HCT116 (cell line): ENCODE measurements at regions of chr7 and their contacts with region 1.

Region 1: DNA sequence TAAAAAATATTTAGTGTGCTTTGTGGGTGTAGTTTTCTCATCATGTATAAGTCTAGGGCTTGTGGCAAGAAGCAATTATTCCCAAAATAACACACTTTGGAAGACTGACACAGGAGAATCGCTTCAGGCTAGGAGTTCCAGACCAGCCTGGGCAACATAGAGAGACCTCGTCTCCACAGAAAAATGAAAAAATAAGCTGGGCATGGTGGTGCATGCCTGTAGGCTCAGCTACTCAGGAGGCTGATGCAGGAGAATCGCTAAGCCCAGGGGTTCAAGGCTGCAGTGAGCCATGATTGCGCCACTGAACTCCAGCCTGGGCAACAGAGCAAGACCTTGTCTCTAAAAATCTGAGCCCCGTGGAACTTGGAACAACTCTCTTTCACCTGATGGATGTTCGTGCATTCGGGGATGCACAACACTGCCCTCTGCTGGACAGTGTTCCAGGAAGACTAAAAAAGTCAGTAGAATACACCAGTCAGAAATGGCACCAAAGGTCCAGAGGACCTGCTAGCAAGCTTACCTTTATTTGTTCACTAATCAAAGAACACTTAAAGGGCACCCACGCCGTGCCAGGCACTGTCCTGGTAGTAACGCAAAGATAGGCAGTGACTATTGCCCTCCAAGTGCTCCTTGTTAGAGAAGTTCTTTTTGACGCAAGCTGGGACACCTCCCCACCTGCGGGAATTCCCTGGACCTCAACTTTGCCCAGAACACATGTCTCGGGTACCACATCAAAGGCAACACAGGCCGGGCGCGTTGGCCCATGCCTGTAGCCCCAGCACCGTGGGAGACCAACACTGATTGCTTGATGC is 81.9 kb upstream of the CALN1 start:
- DNase-seq: peak; percentile 51
- ATAC-seq: peak; percentile 83
- H3K4me3 ChIP-seq: no peak overlapping the region
- H3K27ac ChIP-seq: no peak overlapping the region
- H3K4me1 ChIP-seq: no peaks in the 10 kb centered on the region
- H3K27me3 ChIP-seq: no peaks in the 10 kb centered on the region
- CTCF ChIP-seq: peak in 2 of 3 experiments; percentile 70 to 81; a peak in 4 of 6 replicates
- POLR2A ChIP-seq: no peak
- RAD21 ChIP-seq: peak; percentile 46; the same call in 1 of the 2 replicates

Region 2: DNA sequence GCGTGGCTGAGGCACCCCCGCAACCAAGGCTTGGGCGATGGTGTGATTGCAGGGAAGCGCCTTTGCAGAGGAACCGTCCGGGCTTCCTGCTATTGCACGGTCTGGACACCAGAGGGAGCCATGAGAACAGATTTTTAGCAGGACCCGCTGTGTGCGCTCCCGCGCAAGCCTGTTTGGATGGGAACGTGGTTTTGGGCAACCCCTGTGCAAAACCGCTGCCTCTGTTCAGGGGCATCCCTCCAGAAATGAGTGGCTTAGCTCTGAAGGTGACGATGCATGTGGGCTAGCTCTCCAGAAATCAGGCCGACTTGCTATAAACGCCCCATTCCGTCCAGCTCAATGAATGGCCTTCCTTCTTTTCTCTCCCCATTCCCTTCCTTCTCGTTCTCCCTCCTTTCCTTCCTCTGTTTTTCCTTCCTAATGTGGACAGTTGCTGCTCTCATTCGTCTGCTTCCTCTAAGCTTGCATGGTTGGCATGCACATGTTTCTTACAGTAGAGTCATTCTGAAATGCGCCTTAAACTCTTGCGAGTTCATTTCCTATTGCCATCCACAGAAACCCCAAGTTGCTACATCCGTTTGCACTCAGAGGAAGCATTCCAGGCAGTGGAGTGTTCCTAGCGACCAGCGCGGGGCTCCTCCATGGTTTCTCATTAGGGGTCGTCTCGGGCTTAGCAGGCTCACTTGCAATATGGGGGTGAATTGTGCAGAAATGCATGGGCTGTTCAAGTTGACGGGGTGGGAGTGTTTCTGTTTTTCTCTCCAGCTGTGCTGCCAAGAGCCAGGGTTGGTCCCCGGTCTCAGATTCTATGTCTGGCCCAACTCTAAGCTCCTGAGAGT is 1664.6 kb before region 1 on chr7:
- CTCF ChIA-PET with region 1: no interaction called
- POLR2A ChIA-PET with region 1: no interaction called
- RAD21 ChIA-PET with region 1: no interaction called
- intact Hi-C with region 1: loop called (anchors 10 kb)
- DNase-seq: peak; percentile 2
- ATAC-seq: peak; percentile 63
- H3K4me3 ChIP-seq: no peak overlapping the region
- H3K27ac ChIP-seq: no peak overlapping the region
- H3K4me1 ChIP-seq: no peaks in the 10 kb centered on the region
- H3K27me3 ChIP-seq: no peaks in the 10 kb centered on the region
- CTCF ChIP-seq: peak in 2 of 3 experiments; percentile 73 to 77; a peak in 4 of 6 replicates
- POLR2A ChIP-seq: no peak
- RAD21 ChIP-seq: peak; percentile 49

Region 3: GRCh38 chr7:70856866-70857630 is 1637.0 kb before region 1 on chr7:
- CTCF ChIA-PET with region 1: no interaction called
- POLR2A ChIA-PET with region 1: no interaction called
- RAD21 ChIA-PET with region 1: no interaction called
- intact Hi-C with region 1: loop called (anchors 5 kb)
- DNase-seq: peak; percentile 13
- ATAC-seq: no peak
- H3K4me3 ChIP-seq: no peak overlapping the region
- H3K27ac ChIP-seq: no peak overlapping the region
- H3K4me1 ChIP-seq: no peaks in the 10 kb centered on the region
- H3K27me3 ChIP-seq: no peaks in the 10 kb centered on the region
- CTCF ChIP-seq: peak; percentile 16 to 70 (median 62); a peak in 4 of 6 replicates
- POLR2A ChIP-seq: no peak
- RAD21 ChIP-seq: peak; percentile 51; the same call in 1 of the 2 replicates

Region 4: DNA sequence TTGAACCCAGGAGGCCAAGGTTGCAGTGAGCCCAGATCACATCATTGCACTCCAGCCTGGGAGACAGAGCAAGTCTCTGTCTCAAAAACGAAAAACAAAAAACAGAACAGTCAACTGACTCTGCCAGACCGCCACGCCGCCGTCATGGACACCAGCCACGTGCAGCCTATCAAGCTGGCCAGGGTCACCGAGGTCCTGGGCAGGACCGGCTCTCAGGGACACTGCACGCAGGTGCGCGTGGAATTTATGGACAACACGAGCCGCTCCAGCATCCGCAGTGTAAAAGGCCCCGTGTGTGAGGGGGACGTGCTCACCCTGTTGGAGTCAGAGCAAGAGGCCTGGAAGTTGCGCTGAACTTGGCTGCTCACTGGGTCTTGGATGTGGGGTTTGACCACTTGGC is 551.9 kb before region 1 on chr7:
- CTCF ChIA-PET with region 1: no interaction called
- POLR2A ChIA-PET with region 1: no interaction called
- RAD21 ChIA-PET with region 1: no interaction called
- intact Hi-C with region 1: no loop called
- DNase-seq: no peak
- ATAC-seq: no peak
- H3K4me3 ChIP-seq: no peak overlapping the region
- H3K27ac ChIP-seq: no peak overlapping the region
- H3K4me1 ChIP-seq: no peaks in the 10 kb centered on the region
- H3K27me3 ChIP-seq: no peaks in the 10 kb centered on the region
- CTCF ChIP-seq: no peak
- POLR2A ChIP-seq: no peak
- RAD21 ChIP-seq: no peak

Region 5: DNA sequence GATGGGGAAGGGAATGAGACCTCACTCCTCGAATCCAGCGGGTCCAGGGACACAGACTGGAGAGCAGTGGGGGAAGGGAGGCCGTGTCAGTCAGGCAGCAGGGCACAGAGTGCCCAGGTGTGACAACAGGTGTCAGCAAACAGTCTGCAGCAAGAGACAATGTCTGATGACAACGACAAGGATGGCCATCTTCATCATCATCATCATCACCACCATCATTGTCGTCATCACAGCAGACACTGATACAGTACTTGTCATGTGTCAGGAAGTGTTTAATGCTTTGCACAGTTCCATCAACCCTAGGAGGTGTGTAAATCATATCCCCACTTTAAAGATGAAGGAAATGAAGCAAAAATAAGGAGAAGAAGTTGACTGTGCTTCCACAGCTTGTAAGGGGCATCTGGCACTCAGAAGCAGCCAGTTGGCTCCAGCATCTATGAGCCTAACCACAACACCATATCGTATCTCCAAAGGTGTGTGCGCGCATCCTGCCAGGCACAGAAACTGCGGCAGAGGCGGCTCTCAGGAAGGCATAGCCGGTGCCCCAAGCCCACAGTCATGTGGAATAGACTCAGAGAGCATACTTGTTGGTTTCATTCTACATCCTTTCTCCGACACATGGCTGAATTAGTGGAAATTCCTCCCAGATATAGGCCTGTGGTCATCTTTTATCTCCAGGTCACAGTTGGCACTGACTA is 506.0 kb before region 1 on chr7:
- CTCF ChIA-PET with region 1: no interaction called
- POLR2A ChIA-PET with region 1: no interaction called
- RAD21 ChIA-PET with region 1: no interaction called
- intact Hi-C with region 1: no loop called
- DNase-seq: no peak
- ATAC-seq: no peak
- H3K4me3 ChIP-seq: no peak overlapping the region
- H3K27ac ChIP-seq: no peak overlapping the region
- H3K4me1 ChIP-seq: no peaks in the 10 kb centered on the region
- H3K27me3 ChIP-seq: no peaks in the 10 kb centered on the region
- CTCF ChIP-seq: no peak
- POLR2A ChIP-seq: no peak
- RAD21 ChIP-seq: no peak

Region 6: DNA sequence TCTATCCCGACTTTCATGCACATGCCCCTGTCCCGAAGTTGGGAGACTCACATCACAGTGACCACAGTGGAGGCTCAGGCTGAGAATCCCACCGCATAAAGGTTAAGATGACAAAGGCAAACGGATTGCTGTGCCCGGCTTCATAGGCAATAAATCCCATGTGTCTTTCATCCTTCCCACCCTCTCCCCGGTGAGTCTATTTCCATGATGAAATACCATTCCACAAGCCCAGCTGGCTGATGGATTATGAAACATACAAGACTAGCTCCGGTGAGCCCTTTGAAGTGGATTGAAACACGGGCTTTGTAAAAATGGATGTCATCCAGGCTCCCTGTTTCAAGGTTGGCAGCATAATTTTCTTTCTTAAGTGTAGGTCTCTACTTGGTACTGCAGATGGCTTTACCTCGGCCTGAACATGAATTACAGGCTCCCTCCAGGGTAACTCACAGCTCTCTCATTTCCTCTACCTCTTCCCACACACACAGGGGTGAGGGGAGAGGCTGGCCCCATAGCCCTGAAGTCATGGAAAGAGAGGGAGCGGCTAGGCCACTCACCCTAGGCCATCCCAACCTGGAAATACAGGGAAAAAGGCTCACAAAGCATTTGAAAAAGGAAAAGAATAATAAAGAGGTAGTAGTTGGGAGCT is 10.1 kb after region 1 on chr7:
- CTCF ChIA-PET with region 1: interaction called, 13 read pairs
- POLR2A ChIA-PET with region 1: no interaction called
- RAD21 ChIA-PET with region 1: no interaction called
- intact Hi-C with region 1: no loop called
- DNase-seq: no peak
- ATAC-seq: no peak
- H3K4me3 ChIP-seq: no peak overlapping the region
- H3K27ac ChIP-seq: no peak overlapping the region
- H3K4me1 ChIP-seq: no peaks in the 10 kb centered on the region
- H3K27me3 ChIP-seq: peaks cover 12% of the 10 kb centered on the region
- CTCF ChIP-seq: no peak
- POLR2A ChIP-seq: no peak
- RAD21 ChIP-seq: no peak